Activated B cell treated with CpG ODN at 0.5 μM for 24 hours (primary cell): ENCODE measurements at regions of chr11 and their contacts with region 1.

Region 1: DNA sequence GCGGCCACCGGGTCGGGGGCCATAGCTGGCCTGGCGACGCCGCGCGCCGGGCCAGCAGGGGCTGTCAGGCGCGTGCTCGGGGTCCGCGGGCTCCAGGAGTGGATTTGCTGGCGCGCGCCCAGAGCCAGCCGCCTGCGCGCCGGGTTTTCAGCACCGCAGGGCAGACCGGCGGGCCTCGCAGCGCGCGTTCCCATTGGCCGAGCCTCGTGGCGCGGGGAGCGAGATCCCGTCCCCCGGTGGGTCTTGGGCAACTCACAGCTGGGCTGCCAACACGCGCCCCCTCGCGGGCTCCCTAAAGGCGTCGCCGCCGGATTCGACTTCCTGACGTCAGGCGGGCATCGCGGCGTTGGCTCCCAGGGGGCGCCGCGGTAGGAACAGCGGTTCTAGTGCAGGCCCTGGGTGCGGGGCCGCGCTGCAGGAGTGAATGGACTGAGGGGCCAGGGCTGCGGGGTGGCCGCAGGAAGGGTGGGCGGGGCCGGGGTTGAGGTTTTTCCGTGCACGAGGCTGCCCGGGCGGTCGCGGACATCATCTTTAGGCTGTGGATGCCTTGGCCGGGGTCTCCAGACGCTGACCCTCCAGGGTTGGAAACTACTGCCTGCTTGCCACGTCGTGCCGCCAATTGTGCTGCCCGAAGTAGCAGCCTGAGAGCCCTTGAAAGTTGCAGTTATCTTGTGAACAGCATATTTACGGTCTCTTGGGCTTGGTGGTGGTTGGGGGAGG is at the start of gene FADS1:
- DNase-seq: peak; percentile 75
- ATAC-seq: peak; percentile 63
- H3K4me3 Mint-ChIP-seq: peak within 1 kb of the TSS; percentile 92
- H3K27ac Mint-ChIP-seq: peak within 1 kb of the TSS; percentile 72
- H3K4me1 Mint-ChIP-seq: peaks cover 16% of the 10 kb centered on the region
- H3K27me3 Mint-ChIP-seq: peaks cover 4% of the 10 kb centered on the region
- CTCF ChIP-seq: no peak
- total RNA-seq, gene FADS1: 19.6 and 23.3 TPM in 2 replicates

Region 2: DNA sequence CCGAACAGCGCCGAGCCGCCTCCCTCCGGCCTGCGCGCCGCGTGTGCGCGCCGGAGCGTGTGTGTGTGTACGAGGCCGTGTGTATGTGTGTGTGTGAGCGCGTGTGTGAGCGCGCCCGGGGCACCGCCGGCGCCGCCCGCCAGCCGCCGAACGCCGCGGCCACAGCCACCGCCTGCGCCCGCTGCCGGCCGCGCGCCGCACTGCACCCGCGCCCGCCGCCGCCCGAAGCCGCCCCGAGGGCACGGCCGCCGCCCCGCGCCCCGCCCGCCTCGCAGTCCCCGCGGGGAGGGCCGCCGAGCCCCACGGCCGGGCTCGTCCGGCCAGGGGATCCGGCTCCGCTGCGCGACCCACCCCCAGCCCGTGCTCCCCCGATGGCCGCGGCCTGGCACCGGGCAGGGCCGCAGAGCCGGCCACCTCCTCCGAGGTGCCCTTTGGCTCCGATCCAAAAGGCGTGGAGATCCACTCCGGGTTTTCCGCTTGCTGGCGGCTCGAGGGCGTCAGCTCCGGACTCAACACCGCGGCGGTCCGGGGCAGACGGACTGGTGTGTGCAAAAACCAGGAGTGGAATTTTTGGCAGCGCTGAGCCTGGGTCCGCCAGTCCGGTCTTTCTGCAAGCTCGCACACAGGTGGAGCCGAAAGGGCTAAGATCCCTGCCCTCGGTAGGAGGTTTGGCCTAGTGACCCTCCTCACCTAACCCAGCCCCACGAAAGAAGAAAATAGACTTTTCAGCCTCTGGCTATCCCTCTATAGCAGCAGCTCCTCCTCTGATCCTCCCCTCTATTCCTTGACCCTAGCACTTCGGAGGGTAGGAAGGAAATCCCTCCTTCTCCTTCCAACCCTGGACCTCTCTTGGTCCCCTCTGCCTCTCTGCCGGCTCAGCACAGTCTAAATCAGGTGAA is 235.6 kb before region 1 on chr11 and contains the start of gene SYT7:
- CTCF ChIA-PET with region 1: no interaction called
- POLR2A ChIA-PET with region 1: no interaction called
- intact Hi-C with region 1: loop called (anchors 10 kb)
- DNase-seq: peak; percentile 99
- ATAC-seq: peak; percentile 90
- H3K4me3 Mint-ChIP-seq: peak within 1 kb of the TSS; percentile 82
- H3K27ac Mint-ChIP-seq: peak within 1 kb of the TSS; percentile 59
- H3K4me1 Mint-ChIP-seq: peaks cover 14% of the 10 kb centered on the region
- H3K27me3 Mint-ChIP-seq: peaks cover 53% of the 10 kb centered on the region
- CTCF ChIP-seq: no peak
- total RNA-seq, gene SYT7: not detected in 2 replicates

Region 3: GRCh38 chr11:61695917-61696316 is 121.0 kb before region 1 on chr11:
- CTCF ChIA-PET with region 1: no interaction called
- POLR2A ChIA-PET with region 1: no interaction called
- intact Hi-C with region 1: no loop called
- DNase-seq: peak; percentile 49
- ATAC-seq: peak; percentile 95
- H3K4me3 Mint-ChIP-seq: no peak overlapping the region
- H3K27ac Mint-ChIP-seq: no peak overlapping the region
- H3K4me1 Mint-ChIP-seq: peaks cover 16% of the 10 kb centered on the region
- H3K27me3 Mint-ChIP-seq: peaks cover 8% of the 10 kb centered on the region
- CTCF ChIP-seq: no peak

Region 4: DNA sequence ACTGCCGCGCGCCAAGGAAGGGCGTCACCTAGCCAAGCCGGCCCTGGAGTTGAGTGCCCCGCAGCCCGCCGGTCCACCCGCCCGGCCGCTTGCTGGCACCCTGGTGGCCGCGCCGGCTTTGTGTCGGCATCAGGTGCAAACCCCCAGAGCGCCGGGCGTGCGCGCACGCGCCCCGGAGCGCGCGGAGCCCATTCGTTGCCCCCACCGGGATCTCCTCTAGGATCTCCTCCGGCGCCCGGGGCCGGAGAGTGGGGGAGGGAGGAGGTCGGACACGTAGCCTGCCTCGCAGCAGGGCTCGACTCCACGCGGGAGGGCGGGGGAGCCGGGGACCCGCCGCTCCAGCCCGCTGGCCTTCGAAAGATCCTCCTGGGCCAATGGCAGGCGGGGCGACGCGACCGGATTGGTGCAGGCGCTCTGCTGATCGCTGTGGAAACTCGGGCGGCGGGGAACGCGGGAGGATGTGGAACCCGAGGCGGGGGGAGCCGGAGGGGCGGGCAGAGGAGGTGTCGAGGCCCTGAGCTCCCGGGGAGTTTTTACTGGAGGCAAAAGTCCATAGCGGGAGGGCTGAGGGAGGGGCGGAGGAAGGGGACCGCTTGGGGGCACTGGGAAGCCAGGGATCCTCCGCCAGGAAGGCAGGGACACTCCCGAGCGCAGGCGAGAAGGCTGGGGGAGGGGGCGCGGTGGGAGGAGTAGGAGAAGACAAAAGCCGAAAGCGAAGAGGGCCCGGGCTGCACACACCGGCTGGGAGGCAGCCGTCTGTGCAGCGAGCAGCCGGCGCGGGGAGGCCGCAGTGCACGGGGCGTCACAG is 10.9 kb after region 1 on chr11 and contains the start of gene FADS2:
- CTCF ChIA-PET with region 1: interaction called, 32 read pairs
- POLR2A ChIA-PET with region 1: interaction called, 61 read pairs
- intact Hi-C with region 1: loop called (anchors 1 kb)
- DNase-seq: peak; percentile 64
- ATAC-seq: peak; percentile 77
- H3K4me3 Mint-ChIP-seq: peak within 1 kb of the TSS; percentile 89
- H3K27ac Mint-ChIP-seq: peak within 1 kb of the TSS; percentile 86
- H3K4me1 Mint-ChIP-seq: peaks cover 26% of the 10 kb centered on the region
- H3K27me3 Mint-ChIP-seq: peaks cover 8% of the 10 kb centered on the region
- CTCF ChIP-seq: no peak
- total RNA-seq, gene FADS2: 10.9 and 13.4 TPM in 2 replicates

Region 5: DNA sequence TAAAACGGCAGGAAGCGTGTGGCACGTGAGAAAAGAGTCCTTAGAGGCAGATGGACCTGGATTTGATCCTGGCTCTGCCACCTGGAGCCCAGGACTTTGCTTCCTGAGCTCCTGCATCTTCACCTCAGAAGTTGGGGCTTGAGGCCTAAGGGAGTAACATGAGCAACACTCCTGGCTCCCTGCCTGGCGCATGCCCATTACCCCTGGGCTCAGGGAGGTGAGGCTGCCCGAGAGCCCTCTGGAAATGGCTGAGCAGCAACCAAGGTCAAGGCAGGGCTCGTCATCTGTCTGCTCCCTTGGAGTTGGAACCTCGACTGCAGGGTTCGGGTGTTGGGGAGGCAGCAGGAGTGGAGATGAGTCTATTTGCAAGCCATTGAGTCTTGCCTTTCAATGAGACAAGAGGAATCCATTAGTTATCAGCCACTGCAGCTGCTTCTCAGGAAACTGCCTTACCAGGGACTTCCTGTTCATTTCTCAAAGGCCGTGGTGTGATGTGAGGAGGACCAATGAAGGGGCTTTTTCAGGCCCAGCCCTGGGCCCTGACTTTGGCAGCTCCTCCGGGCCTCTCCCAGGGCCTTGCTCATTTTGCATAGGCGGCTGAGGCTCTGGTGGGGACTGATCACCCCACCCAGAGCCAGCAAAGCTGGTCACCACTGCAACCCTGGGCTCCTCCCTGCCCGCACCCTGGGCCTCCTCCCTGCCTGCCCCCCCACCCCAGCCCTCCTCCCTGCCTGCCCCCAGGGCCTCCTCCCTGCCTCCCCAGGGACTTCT is 17.6 kb after region 1 on chr11:
- CTCF ChIA-PET with region 1: interaction called, 32 read pairs
- POLR2A ChIA-PET with region 1: interaction called, 61 read pairs
- intact Hi-C with region 1: loop called (anchors 2 kb)
- DNase-seq: peak; percentile 29
- ATAC-seq: peak; percentile 96
- H3K4me3 Mint-ChIP-seq: peak overlapping the region; percentile 28
- H3K27ac Mint-ChIP-seq: peak overlapping the region; percentile 86
- H3K4me1 Mint-ChIP-seq: peaks cover 38% of the 10 kb centered on the region
- H3K27me3 Mint-ChIP-seq: peaks cover 4% of the 10 kb centered on the region
- CTCF ChIP-seq: no peak

Region 6: GRCh38 chr11:61891331-61892084 is 74.6 kb after region 1 on chr11 and contains the start of gene FADS3:
- CTCF ChIA-PET with region 1: interaction called, 4 read pairs
- POLR2A ChIA-PET with region 1: interaction called, 9 read pairs
- intact Hi-C with region 1: loop called (anchors 5 kb)
- DNase-seq: peak; percentile 81
- ATAC-seq: peak; percentile 63
- H3K4me3 Mint-ChIP-seq: peak within 1 kb of the TSS; percentile 88
- H3K27ac Mint-ChIP-seq: peak within 1 kb of the TSS; percentile 87
- H3K4me1 Mint-ChIP-seq: peaks cover 41% of the 10 kb centered on the region
- H3K27me3 Mint-ChIP-seq: no peaks in the 10 kb centered on the region
- CTCF ChIP-seq: no peak
- total RNA-seq, gene FADS3: 121 and 135 TPM in 2 replicates

Region 7: GRCh38 chr11:61947486-61948210 is 130.8 kb after region 1 on chr11:
- CTCF ChIA-PET with region 1: interaction called, 4 read pairs
- POLR2A ChIA-PET with region 1: no interaction called
- intact Hi-C with region 1: loop called (anchors 5 kb)
- DNase-seq: peak; percentile 51
- ATAC-seq: peak; percentile 92
- H3K4me3 Mint-ChIP-seq: no peak overlapping the region
- H3K27ac Mint-ChIP-seq: no peak overlapping the region
- H3K4me1 Mint-ChIP-seq: peaks cover 11% of the 10 kb centered on the region
- H3K27me3 Mint-ChIP-seq: no peaks in the 10 kb centered on the region
- CTCF ChIP-seq: peak; percentile 35